Activated CD8-positive, alpha-beta T cell treated with anti-CD3 and anti-CD28 coated beads, Interleukin-2, amount 10 ng/mL, durations not matched to agents 7 days and 5 days (primary cell): ENCODE measurements at regions of chr4 and their contacts with region 1.

Region 1: GRCh38 chr4:147866532-147867271 is 134.8 kb downstream of the ARHGAP10 start:
- DNase-seq: peak; percentile 96
- ATAC-seq: peak; percentile 98
- H3K4me3 Mint-ChIP-seq: no peak overlapping the region
- H3K27ac Mint-ChIP-seq: no peak overlapping the region
- H3K4me1 Mint-ChIP-seq: peaks cover 3% of the 10 kb centered on the region
- H3K27me3 Mint-ChIP-seq: no peaks in the 10 kb centered on the region

Region 2: GRCh38 chr4:147071209-147071740 is 795.4 kb before region 1 on chr4:
- CTCF ChIA-PET with region 1: no interaction called
- POLR2A ChIA-PET with region 1: no interaction called
- DNase-seq: no peak
- ATAC-seq: no peak
- H3K4me3 Mint-ChIP-seq: no peak overlapping the region
- H3K27ac Mint-ChIP-seq: no peak overlapping the region
- H3K4me1 Mint-ChIP-seq: no peaks in the 10 kb centered on the region
- H3K27me3 Mint-ChIP-seq: peaks cover 2% of the 10 kb centered on the region

Region 3: DNA sequence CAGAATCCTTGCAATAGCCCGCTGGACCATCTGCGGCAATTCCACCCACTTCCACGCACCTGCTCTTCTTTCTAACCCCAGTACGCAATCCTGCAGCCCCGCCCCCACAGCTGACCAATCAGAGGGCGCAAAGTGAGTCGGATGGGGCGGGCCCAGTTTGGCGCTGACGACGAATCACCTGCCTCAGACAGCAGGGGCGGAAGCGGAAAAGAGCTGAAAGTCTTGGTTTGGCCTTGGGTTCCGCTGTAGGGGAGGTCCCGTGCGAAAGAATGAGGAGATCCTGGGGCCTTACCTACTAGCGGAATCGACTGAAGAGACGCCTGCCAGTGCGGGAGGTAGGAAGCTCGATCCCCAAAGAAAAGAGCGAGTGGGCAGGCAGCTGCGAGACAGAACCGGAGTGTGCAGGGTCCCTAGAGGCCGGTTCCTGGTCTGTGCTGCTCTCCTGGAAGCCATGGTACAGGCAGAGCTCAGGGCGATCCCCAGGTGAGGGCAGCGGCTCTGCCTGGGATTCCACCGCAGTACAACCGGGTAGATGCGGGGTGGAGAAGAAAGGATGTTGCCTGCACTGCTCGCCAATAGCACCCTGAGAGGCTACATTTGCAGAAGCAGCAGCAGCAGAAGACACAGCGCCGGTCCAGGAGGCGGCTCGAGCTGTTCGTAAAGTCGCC is 249.4 kb before region 1 on chr4 and contains the start of gene TMEM184C:
- CTCF ChIA-PET with region 1: interaction called, 69 read pairs
- POLR2A ChIA-PET with region 1: interaction called, 5 read pairs
- DNase-seq: peak; percentile 99
- ATAC-seq: peak; percentile 99
- H3K4me3 Mint-ChIP-seq: peak within 1 kb of the TSS; percentile 86
- H3K27ac Mint-ChIP-seq: peak within 1 kb of the TSS; percentile 94
- H3K4me1 Mint-ChIP-seq: peaks cover 22% of the 10 kb centered on the region
- H3K27me3 Mint-ChIP-seq: peaks cover 14% of the 10 kb centered on the region
- total RNA-seq, gene TMEM184C: 18.5 to 20.6 TPM

Region 4: GRCh38 chr4:147683717-147684700 is 182.7 kb before region 1 on chr4 and contains the start of gene PRMT9:
- CTCF ChIA-PET with region 1: interaction called, 43 read pairs
- POLR2A ChIA-PET with region 1: no interaction called
- DNase-seq: peak; percentile 92
- ATAC-seq: peak; percentile 98
- H3K4me3 Mint-ChIP-seq: peak within 1 kb of the TSS; percentile 87
- H3K27ac Mint-ChIP-seq: peak within 1 kb of the TSS; percentile 95
- H3K4me1 Mint-ChIP-seq: peaks cover 47% of the 10 kb centered on the region
- H3K27me3 Mint-ChIP-seq: peaks cover 2% of the 10 kb centered on the region
- total RNA-seq, gene PRMT9: 12.5 to 13.4 TPM

Region 5: GRCh38 chr4:147731580-147732517 is 134.9 kb before region 1 on chr4 and contains the start of gene ARHGAP10:
- CTCF ChIA-PET with region 1: interaction called, 49 read pairs
- POLR2A ChIA-PET with region 1: interaction called, 3 read pairs
- DNase-seq: peak; percentile 62
- ATAC-seq: peak; percentile 83
- H3K4me3 Mint-ChIP-seq: peak within 1 kb of the TSS; percentile 86
- H3K27ac Mint-ChIP-seq: peak within 1 kb of the TSS; percentile 81
- H3K4me1 Mint-ChIP-seq: peaks cover 31% of the 10 kb centered on the region
- H3K27me3 Mint-ChIP-seq: peaks cover 44% of the 10 kb centered on the region
- total RNA-seq, gene ARHGAP10: 6.3 to 7.1 TPM

Region 6: GRCh38 chr4:147809211-147809610 is 57.5 kb before region 1 on chr4:
- CTCF ChIA-PET with region 1: interaction called, 19 read pairs
- POLR2A ChIA-PET with region 1: no interaction called
- DNase-seq: no peak
- ATAC-seq: no peak
- H3K4me3 Mint-ChIP-seq: no peak overlapping the region
- H3K27ac Mint-ChIP-seq: no peak overlapping the region
- H3K4me1 Mint-ChIP-seq: no peaks in the 10 kb centered on the region
- H3K27me3 Mint-ChIP-seq: peaks cover 27% of the 10 kb centered on the region

Region 7: GRCh38 chr4:147843162-147843561 is 23.5 kb before region 1 on chr4:
- CTCF ChIA-PET with region 1: interaction called, 80 read pairs
- POLR2A ChIA-PET with region 1: no interaction called
- DNase-seq: peak; percentile 26
- ATAC-seq: no peak
- H3K4me3 Mint-ChIP-seq: no peak overlapping the region
- H3K27ac Mint-ChIP-seq: no peak overlapping the region
- H3K4me1 Mint-ChIP-seq: no peaks in the 10 kb centered on the region
- H3K27me3 Mint-ChIP-seq: peaks cover 17% of the 10 kb centered on the region